ENCODE measurements at regions of chr17 and their contacts with region 1.

Region 1: GRCh38 chr17:4420692-4421131 is 13.0 kb upstream of the SPNS3 start:
- DNase-seq: peak; percentile 78
- H3K4me3 Mint-ChIP-seq: no peak overlapping the region
- H3K27ac Mint-ChIP-seq: no peak overlapping the region
- H3K4me1 Mint-ChIP-seq: peaks cover 3% of the 10 kb centered on the region
- H3K27me3 Mint-ChIP-seq: no peaks in the 10 kb centered on the region

Region 2: DNA sequence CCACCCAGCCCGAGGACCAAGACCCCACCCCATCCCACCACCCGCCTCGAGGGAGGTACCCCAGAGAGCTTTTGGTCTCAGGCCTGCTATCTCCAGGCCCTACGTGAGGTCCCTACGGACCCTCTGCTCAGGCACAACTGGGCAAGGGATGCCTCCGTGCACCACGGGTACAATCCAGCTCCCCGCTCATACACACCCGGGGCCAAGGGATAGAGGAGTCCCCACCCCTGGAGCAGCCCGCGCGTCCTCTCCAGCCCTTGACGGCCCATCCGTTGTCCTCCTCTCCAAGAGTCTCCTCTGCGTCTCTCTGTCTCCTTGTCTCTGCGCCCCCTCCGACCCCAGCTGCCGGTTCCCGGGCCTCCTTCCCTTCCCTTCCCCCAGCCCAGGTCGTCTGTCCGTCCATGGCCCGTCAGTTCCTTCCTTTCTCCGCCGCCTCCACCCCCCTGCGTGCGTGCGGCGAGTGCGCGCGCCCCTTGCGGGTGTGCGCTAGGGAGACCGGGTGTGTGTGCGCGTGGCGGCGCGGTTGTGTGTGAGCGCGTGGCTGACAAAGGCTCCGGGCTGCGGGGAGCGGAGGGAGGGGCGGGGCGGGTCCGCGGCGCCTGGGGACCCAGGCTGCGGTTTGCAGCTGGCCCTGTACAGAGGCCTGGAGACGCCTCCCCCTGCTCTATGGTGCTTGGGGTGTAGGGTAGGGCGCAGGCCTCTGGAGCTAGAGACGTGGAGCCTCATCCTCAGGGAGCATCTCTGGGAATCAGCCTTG is 78.9 kb after region 1 on chr17:
- CTCF ChIA-PET with region 1: interaction called, 4 read pairs
- intact Hi-C with region 1: loop called (anchors 5 kb)
- DNase-seq: peak; percentile 18
- H3K4me3 Mint-ChIP-seq: peak overlapping the region; percentile 68
- H3K27ac Mint-ChIP-seq: no peak overlapping the region
- H3K4me1 Mint-ChIP-seq: peaks cover 19% of the 10 kb centered on the region
- H3K27me3 Mint-ChIP-seq: peaks cover 34% of the 10 kb centered on the region

Region 3: GRCh38 chr17:4540224-4540641 is 119.5 kb after region 1 on chr17:
- CTCF ChIA-PET with region 1: no interaction called
- intact Hi-C with region 1: loop called (anchors 2 kb)
- DNase-seq: no peak
- H3K4me3 Mint-ChIP-seq: no peak overlapping the region
- H3K27ac Mint-ChIP-seq: no peak overlapping the region
- H3K4me1 Mint-ChIP-seq: no peaks in the 10 kb centered on the region
- H3K27me3 Mint-ChIP-seq: no peaks in the 10 kb centered on the region

Region 4: DNA sequence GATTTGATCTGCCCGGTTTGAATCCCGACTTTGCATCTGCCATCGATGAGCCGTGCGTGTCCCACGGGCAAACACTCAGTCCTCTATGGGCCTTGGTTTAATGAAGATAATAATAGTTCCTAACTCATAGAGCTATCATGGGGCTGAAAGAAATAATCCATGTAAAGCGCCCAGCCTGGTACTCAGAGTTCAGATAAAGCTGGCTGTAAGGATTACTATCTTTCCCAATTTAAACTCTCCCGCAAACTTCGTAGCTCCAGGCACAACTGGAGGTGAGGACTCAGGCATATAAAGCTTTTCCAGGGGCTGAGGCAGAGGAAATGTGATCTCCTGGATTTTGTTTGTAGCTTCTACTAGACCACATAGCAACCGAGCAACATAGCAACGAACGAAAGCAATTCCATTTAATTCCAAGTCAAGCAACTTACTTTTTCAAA is 204.5 kb after region 1 on chr17:
- CTCF ChIA-PET with region 1: interaction called, 7 read pairs
- intact Hi-C with region 1: loop called (anchors 1 kb)
- DNase-seq: no peak
- H3K4me3 Mint-ChIP-seq: no peak overlapping the region
- H3K27ac Mint-ChIP-seq: no peak overlapping the region
- H3K4me1 Mint-ChIP-seq: no peaks in the 10 kb centered on the region
- H3K27me3 Mint-ChIP-seq: peaks cover 4% of the 10 kb centered on the region

Region 5: DNA sequence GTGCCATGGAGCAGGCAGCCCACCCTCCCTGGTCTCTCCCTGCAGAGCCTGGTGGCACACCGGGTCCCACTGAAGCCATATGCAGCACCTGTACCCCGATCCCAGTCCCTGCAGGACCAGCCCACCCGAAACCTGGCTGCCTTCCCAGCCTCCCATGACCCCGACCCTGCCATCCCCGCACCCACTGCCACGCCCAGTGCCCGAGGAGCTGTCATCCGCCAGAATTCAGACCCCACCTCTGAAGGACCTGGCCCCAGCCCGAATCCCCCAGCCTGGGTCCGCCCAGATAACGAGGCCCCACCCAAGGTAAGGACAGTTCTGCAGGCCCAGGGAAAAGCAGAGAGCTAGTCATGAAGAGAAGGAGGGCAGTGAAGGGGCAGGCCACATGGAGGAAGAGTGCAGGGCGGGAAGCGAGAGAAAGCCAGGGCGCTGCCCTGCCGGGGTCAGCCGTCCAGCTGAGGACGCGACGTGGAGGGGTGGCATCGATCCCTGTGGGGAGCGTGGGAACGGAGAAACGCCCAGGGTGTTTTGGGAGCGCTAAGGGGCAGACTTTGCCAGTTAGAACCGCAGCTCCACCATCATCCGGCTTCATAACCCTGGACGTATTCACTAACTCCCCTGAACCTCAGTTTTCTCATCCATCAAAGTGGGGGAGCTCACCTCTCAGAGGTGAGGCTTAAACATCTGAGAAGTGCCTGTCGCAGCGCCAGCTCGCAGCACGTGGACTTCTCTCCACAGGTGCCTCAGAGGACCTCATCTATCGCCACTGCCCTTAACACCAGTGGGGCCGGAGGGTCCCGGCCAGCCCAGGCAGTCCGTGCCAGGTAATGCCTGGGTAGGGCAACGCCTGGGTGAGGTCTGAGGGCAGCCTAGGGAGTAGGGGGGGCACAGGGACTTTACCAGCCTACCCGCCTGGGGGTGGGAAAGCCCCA is 471.0 kb after region 1 on chr17:
- CTCF ChIA-PET with region 1: no interaction called
- intact Hi-C with region 1: loop called (anchors 2 kb)
- DNase-seq: no peak
- H3K4me3 Mint-ChIP-seq: no peak overlapping the region
- H3K27ac Mint-ChIP-seq: no peak overlapping the region
- H3K4me1 Mint-ChIP-seq: no peaks in the 10 kb centered on the region
- H3K27me3 Mint-ChIP-seq: no peaks in the 10 kb centered on the region